ENCODE measurements at regions of chr13 and their contacts with region 1.

Region 1: DNA sequence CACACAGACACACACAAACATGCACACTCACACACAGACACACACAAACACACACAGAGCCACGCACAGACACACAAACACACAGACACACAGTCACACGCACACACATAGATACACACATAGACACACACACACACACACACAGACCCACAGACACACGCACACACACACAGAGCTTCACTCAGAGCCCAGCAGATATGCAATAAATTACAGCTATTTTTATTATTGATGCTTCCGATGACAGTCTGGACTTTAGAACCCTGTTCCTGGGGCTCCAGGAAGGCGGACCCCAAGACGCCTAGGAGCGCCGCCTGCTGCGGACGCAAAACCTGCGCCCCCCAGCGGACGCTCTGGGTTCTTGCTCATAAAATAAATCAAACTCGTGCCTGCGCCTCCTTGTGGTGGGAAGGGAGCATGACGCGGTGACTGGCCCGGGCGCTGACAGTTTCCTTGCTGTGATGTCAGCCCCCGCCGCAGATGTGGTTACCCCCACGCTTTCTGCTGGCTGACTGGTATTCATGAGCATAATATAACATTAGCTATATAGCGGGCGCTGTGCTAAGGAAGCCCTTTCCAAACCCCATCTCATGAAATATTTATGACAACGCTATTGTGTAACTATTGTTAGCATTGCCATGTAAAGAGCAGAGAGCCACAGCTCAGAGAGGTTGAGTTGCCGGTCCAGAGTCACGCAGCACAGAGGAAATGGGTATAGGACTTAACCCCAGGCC is 64.4 kb upstream of the TM9SF2 start:
- DNase-seq: peak; percentile 63 to 96 (median 85)
- ATAC-seq: peak; percentile 84
- H3K4me3 ChIP-seq: no peak overlapping the region
- H3K27ac ChIP-seq: no peak overlapping the region
- H3K4me1 ChIP-seq: peaks cover 0 to 37% of the 10 kb centered on the region in 2 donors
- H3K27me3 ChIP-seq: peaks cover 0 to 23% of the 10 kb centered on the region in 2 donors
- CTCF ChIP-seq: peak; percentile 99 to 100

Region 2: DNA sequence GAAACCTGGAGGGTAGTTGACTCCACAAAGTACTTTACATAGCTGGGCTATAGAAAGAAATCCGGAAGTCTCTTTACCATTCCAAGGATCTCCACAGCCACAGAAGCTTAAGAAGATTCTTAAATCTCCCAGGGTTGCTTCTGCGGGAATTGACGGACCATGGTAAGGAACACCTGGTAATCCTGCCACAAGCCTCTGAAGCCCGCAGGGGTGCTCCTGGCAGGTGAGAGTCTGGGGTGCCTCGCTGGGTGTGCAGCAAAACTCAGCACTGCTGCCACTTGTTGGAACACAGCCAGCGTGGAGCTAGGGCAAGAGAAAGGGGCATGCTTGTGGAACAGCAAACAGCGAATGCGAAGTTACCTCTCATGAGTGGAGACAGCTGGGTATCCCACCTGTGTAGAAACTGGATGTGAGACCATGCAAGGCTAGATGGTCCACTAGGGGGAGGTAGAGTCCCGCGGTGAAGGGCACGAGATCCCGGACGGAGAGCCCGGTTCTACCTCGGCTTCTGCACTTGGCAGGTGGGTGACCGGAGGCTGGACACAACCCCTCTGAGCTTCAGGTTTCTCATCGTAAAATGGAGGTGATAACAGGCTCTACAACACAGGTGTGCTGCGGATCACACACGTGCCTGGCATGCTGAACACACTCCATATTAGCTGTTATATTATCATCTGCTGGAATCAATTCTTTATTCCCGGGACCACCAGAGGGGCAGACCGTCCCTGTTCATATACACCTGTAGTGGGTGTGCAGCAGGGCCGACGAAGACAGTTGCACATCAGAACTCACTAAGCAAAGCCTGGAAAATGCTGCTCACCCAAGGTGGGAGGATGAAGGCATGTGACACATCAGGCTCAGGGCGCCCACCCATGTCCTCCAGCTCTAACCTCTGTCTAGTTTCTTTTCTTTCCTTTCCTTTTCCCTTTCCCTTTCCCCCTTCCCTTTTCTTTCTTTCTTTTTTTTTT is 260.3 kb before region 1 on chr13:
- intact Hi-C with region 1: loop called in 1 of 2 experiments (anchors 5 kb)
- DNase-seq: peak; percentile 44 to 83 (median 68)
- ATAC-seq: peak; percentile 99
- H3K4me3 ChIP-seq: no peak overlapping the region
- H3K27ac ChIP-seq: no peak overlapping the region
- H3K4me1 ChIP-seq: peaks cover 0 to 22% of the 10 kb centered on the region in 2 donors
- H3K27me3 ChIP-seq: peaks cover 5 to 55% of the 10 kb centered on the region in 2 donors
- CTCF ChIP-seq: peak; percentile 89 to 95

Measured in left lung (tissue), 14 donors.